ENCODE measurements at regions of chr17 and their contacts with region 1.

Region 1: DNA sequence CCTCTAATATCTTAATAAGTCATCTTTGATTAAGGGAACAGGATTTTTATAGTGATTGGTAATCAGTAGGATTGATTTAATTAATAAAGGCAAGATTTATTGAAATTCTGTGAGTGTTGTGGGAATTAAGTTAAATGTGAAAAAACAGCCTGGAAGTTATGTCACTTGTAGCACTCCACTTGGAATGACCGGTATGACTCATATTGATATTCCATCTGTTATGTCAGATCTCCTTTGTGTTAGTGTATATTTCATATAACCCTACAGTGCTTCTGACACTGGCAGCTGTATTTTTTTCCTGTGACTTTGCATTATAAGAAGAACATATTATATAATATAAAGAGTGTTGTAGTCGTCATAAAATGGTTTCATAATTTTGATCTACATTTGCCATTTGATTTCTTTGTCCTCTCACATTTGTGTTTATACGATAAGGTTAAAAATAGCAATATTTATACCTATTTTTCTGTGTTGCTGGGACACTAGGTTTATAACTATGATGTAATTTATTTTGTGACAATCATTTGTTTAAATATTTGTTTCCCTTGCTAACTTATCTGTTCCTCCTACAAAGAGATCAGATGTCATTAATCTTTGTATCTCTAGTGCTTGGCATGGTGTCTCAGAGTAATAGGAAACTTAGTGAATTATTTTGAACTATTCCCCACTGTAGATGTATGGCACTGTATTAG is 249.0 kb downstream of the BCAS3 start:
- DNase-seq: no peak
- H3K4me3 ChIP-seq: no peak overlapping the region
- H3K27ac ChIP-seq: no peak overlapping the region
- H3K4me1 ChIP-seq: no peaks in the 10 kb centered on the region
- H3K27me3 ChIP-seq: no peaks in the 10 kb centered on the region
- CTCF ChIP-seq: no peak
- POLR2A ChIP-seq: no peak

Region 2: GRCh38 chr17:59769891-59770290 is 1156.7 kb before region 1 on chr17:
- intact Hi-C with region 1: loop called (anchors 10 kb)
- DNase-seq: no peak
- H3K4me3 ChIP-seq: no peak overlapping the region
- H3K27ac ChIP-seq: no peak overlapping the region
- H3K4me1 ChIP-seq: no peaks in the 10 kb centered on the region
- H3K27me3 ChIP-seq: no peaks in the 10 kb centered on the region
- CTCF ChIP-seq: no peak
- POLR2A ChIP-seq: no peak